ENCODE measurements at regions of chr1 and their contacts with region 1.

Region 1: DNA sequence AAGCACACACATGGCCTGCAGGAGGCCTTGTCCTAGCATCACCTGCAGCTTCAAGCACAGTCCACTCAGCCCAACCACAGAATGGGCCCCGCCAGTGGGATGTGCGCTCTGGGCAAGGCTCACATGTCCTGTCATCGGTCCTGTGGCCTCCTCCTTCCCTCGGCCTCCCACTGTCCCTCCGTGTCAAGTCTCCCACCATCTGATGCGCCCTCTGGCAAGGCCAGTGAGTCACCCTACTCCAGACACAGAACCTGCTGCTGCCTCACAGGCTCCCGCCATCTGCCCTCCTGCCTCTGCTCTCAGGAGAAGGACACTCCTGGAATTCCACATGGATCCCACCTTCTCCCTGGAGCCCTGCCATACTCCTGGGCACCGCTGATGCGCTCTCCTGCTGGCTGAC is 14.2 kb downstream of the KCNAB2 start:
- DNase-seq: no peak
- ATAC-seq: no peak
- H3K4me3 ChIP-seq: no peak overlapping the region
- H3K27ac ChIP-seq: no peak overlapping the region
- H3K4me1 ChIP-seq: no peaks in the 10 kb centered on the region
- H3K27me3 ChIP-seq: peaks cover 0 to 10% (median 7%) of the 10 kb centered on the region in 3 donors
- CTCF ChIP-seq: no peak

Region 2: DNA sequence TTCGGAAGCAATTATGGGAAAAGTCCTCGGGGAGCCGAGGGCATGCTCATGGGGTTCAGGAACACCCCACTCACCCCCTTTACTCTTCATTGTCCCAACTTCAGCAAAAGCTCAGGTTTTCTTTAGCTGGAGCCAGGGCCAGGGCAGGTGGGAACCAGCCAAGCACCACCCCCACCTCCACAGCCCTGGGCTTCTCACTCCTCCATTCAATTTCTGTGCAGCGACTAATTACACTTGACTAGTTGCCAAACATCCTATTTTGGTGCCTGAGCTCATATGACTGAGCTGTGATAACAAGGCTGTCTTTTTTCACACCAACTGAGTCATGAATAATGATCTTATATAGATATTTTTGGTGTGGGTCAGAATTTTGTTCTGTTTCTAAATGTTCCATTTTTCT is 1662.7 kb before region 1 on chr1:
- intact Hi-C with region 1: loop called in 1 of 2 experiments (anchors 5 kb)
- DNase-seq: no peak
- ATAC-seq: no peak
- H3K4me3 ChIP-seq: no peak overlapping the region
- H3K27ac ChIP-seq: no peak overlapping the region
- H3K4me1 ChIP-seq: no peaks in the 10 kb centered on the region
- H3K27me3 ChIP-seq: peaks cover 0 to 5% (median 4%) of the 10 kb centered on the region in 3 donors
- CTCF ChIP-seq: no peak

Measured in psoas muscle (tissue), 8 donors.